CD4-positive, alpha-beta T cell (primary cell): ENCODE measurements at regions of chr1 and their contacts with region 1.

Region 1: DNA sequence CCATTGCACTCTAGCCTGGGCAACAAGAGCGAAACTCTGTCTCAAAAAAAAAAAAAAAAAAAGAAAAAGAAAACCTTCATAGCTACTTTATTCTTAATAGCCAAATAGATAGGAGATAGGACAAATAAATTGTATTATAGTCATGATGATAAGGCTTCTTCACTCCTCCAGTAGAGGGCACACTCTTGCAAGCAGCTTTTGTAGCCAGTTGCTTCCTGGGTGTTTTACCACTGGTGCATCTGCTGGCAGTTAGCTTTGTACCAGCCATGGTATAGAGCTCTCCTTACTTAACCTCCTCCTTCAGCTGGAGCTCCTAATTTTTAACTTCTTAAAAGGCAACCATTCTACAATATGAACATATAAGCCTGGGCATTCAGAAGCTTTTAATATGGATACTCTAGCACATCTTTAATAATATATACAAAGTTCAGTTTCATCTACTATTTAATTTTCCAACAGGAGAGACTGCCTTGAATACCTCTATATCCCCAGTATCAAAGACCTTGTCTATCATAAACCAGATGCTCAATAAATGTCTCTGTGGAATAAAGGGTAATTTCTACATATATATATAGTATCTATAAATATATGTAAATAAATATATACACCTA is 35.8 kb downstream of the EVI5 start:
- DNase-seq: peak in 11 of 14 experiments; percentile 3 to 70 (median 12)
- ATAC-seq: peak; percentile 74
- H3K4me3 ChIP-seq: no peak overlapping the region
- H3K4me3 Mint-ChIP-seq: no peak overlapping the region
- H3K27ac ChIP-seq: no peak overlapping the region
- H3K27ac Mint-ChIP-seq: no peak overlapping the region
- H3K4me1 ChIP-seq: no peaks in the 10 kb centered on the region
- H3K4me1 Mint-ChIP-seq: no peaks in the 10 kb centered on the region
- H3K27me3 ChIP-seq: no peaks in the 10 kb centered on the region
- H3K27me3 Mint-ChIP-seq: peaks cover 4% of the 10 kb centered on the region
- CTCF ChIP-seq: peak; percentile 61

Region 2: GRCh38 chr1:92817986-92818764 is 69.0 kb after region 1 on chr1:
- CTCF ChIA-PET with region 1: interaction called, 17 read pairs
- POLR2A ChIA-PET with region 1: interaction called, 4 read pairs
- intact Hi-C with region 1: loop called in 1 of 2 experiments (anchors 2 kb)
- DNase-seq: peak in 4 of 14 experiments; percentile 20 to 61 (median 48)
- ATAC-seq: peak; percentile 65
- H3K4me3 ChIP-seq: no peak overlapping the region
- H3K4me3 Mint-ChIP-seq: no peak overlapping the region
- H3K27ac ChIP-seq: no peak overlapping the region
- H3K27ac Mint-ChIP-seq: no peak overlapping the region
- H3K4me1 ChIP-seq: no peaks in the 10 kb centered on the region
- H3K4me1 Mint-ChIP-seq: no peaks in the 10 kb centered on the region
- H3K27me3 ChIP-seq: no peaks in the 10 kb centered on the region
- H3K27me3 Mint-ChIP-seq: peaks cover 6% of the 10 kb centered on the region
- CTCF ChIP-seq: peak; percentile 52